Thyroid gland (tissue), 4 donors: ENCODE measurements at regions of chr1 and their contacts with region 1.

Region 1: GRCh38 chr1:32939655-32940371 is 24.8 kb downstream of the RNF19B start:
- DNase-seq: no peak
- H3K4me3 ChIP-seq: no peak overlapping the region
- H3K27ac ChIP-seq: no peak overlapping the region
- H3K4me1 ChIP-seq: peaks cover 0 to 11% of the 10 kb centered on the region in 2 donors
- H3K27me3 ChIP-seq: no peaks in the 10 kb centered on the region
- CTCF ChIP-seq: no peak
- POLR2A ChIP-seq: no peak

Region 2: DNA sequence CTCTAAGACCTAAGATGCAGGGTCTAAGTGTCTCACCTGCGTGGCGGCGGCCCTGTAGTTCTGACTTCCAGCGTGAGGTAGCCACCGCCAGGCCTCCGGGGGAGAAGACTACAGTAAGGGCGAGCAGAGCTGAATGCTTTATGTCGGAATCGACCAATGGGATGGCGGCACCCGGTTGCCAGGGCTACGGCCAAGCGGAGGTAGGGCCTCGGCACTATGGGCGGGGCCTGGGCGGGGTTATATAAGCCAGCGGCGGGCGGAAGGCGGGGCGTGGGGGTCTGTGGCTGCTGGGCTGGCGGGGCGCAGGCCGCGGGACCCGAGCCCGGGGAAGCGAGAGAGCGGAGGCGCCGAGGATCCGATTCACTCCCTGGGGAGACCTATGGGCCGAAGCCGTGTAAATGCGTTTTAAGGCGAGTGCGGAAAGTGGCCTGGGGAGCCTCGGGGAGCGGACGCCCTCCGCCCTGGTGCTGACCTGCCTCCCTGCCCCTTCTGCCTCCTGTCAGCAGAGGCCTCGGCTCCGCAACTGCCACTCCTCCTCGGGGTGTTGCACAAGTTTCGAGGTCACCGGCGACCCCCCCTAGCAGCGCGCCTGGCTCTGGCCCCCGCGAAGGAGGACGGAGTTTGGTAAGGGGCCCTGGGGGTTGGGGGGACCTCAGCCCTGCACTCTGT is 141.2 kb after region 1 on chr1 and contains the start of gene AZIN2:
- intact Hi-C with region 1: loop called (anchors 10 kb)
- DNase-seq: peak; percentile 98
- H3K4me3 ChIP-seq: peak within 1 kb of the TSS; percentile 38 to 70 (median 68)
- H3K27ac ChIP-seq: no peak within 1 kb of the TSS
- H3K4me1 ChIP-seq: peaks cover 11 to 18% of the 10 kb centered on the region in 2 donors
- H3K27me3 ChIP-seq: no peaks in the 10 kb centered on the region
- CTCF ChIP-seq: peak in 1 of 6 experiments; percentile 8
- POLR2A ChIP-seq: peak; percentile 9 to 89
- total RNA-seq, gene AZIN2: 4.9 to 13.6 (median 5.3) TPM